BJ (cell line): ENCODE measurements at regions of chr3 and their contacts with region 1.

Region 1: GRCh38 chr3:114290911-114291901 is 2.6 kb upstream of the TIGIT start:
- DNase-seq: no peak
- H3K4me3 ChIP-seq: no peak overlapping the region
- H3K27me3 ChIP-seq: no peaks in the 10 kb centered on the region; the same call in 1 of the 2 replicates
- CTCF ChIP-seq: peak; percentile 75

Region 2: DNA sequence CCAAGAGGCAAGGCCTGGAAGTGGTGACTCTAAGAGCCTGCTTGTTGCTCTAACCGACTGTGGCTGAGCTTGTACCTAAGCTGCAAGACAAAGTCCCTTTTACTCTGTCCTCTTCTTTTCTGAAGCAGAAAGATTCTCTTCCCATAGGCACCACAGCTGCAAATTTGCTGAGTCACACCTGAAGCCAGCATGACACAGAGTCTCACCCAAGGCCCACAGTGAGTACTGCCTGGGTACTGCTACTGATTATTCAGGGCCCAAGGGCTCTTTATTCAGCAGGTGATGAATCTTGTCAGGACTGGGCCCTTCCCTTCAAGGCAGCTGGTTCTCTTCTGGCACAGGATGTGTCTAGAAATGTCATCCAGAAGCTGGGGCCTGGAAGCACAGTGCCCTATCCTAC is 16.3 kb before region 1 on chr3:
- CTCF ChIA-PET with region 1: interaction called, 10 read pairs
- POLR2A ChIA-PET with region 1: no interaction called
- DNase-seq: no peak
- H3K4me3 ChIP-seq: no peak overlapping the region
- H3K27me3 ChIP-seq: no peaks in the 10 kb centered on the region; the same call in 1 of the 2 replicates
- CTCF ChIP-seq: no peak

Region 3: DNA sequence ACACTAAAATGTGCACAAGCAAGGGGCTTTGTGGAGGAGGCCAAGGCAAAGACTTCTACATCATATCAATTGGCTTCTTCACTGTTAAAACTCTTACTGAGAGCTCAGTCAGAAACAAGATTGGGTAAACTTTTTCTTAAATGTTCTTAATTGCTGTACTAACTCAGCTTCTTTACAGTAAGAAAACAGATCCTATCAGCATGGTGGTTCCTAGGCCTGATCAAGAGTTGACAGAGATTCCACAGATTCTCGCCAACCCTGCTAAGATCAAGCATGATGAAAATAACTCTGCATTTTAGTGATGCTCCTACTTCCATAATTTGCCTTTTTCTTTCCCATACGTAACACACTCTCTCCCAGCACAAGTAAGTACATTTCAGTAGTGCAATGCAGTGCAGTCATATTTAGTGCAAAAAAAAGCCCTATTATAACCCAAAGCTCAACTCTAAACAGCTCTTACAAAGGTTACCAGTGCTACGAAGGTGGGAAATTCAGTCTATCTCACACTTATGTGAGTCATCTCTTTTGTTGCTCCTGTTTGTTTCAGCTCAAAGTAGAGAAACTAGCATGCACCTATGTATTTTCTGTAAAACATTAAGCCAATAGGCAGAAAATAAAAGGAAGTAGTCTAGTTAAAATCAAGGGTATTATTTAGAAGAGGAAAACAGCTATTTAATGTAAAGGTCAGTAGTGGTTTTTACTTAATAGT is 32.5 kb after region 1 on chr3:
- CTCF ChIA-PET with region 1: interaction called, 10 read pairs
- POLR2A ChIA-PET with region 1: no interaction called
- DNase-seq: no peak
- H3K4me3 ChIP-seq: no peak overlapping the region
- H3K27me3 ChIP-seq: no peaks in the 10 kb centered on the region
- CTCF ChIP-seq: no peak

Region 4: DNA sequence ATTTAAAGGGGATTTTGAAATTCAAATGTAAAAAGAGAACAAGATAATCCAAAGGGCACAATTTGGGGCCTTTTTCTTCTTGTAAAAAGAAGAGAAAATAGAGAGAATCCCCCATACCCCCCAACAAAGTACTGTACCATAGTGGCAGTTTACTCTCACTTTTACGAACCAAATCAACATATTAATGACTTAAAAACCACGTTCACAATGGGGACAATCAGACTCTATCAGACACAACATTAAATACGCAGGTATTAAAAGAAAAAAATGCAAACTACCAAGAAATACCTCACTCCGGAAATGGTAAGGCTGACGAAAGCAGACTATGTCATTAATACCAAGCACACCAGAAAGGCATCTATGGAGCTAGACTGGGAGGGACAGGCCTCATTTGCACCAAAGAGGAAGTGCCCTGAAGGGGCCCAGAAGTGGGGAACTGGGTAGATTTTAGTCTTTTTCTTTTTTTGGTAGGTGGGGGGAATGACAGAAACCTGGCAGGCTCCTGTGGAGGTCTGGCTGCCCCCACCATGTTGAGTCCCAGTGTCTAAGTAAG is 136.9 kb after region 1 on chr3:
- CTCF ChIA-PET with region 1: no interaction called
- POLR2A ChIA-PET with region 1: no interaction called
- DNase-seq: no peak
- H3K4me3 ChIP-seq: no peak overlapping the region
- H3K27me3 ChIP-seq: no peaks in the 10 kb centered on the region
- CTCF ChIP-seq: no peak

Region 5: DNA sequence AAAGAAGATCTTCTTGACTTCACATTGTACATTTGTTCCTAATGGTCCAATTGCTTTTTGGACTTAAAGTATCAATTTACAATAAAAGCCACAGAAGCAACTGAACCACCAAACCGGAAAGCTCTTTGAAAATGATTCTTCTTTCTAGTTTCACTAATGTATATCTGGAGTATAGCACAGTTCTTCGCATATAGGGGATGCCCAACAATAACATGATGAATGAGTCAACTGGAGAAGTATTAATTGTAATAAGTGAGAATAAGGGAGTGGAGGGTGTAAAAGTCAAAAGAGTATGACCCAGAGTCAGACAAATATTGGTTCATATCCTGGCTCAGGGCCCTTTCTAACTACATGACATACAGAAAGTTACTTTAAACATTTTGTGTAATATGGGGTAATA is 430.7 kb after region 1 on chr3:
- CTCF ChIA-PET with region 1: no interaction called
- POLR2A ChIA-PET with region 1: no interaction called
- DNase-seq: no peak
- H3K4me3 ChIP-seq: no peak overlapping the region
- H3K27me3 ChIP-seq: no peaks in the 10 kb centered on the region
- CTCF ChIP-seq: no peak